Mammary epithelial cell (primary cell): ENCODE measurements at regions of chr15 and their contacts with region 1.

Region 1: GRCh38 chr15:70400766-70401541 is 303.2 kb upstream of the TLE3 start:
- DNase-seq: no peak
- H3K4me3 ChIP-seq: no peak overlapping the region
- H3K27ac ChIP-seq: no peak overlapping the region
- H3K4me1 ChIP-seq: no peaks in the 10 kb centered on the region
- H3K27me3 ChIP-seq: peaks cover 4% of the 10 kb centered on the region
- CTCF ChIP-seq: no peak

Region 2: GRCh38 chr15:70245932-70246331 is 155.0 kb before region 1 on chr15:
- CTCF ChIA-PET with region 1: no interaction called
- dilution Hi-C with region 1: no loop called
- in situ Hi-C with region 1: no loop called
- intact Hi-C with region 1: no loop called
- DNase-seq: peak; percentile 81
- H3K4me3 ChIP-seq: no peak overlapping the region
- H3K27ac ChIP-seq: no peak overlapping the region
- H3K4me1 ChIP-seq: peaks cover 16% of the 10 kb centered on the region
- H3K27me3 ChIP-seq: no peaks in the 10 kb centered on the region
- CTCF ChIP-seq: no peak

Region 3: GRCh38 chr15:70334286-70334685 is 66.7 kb before region 1 on chr15:
- CTCF ChIA-PET with region 1: no interaction called
- dilution Hi-C with region 1: loop called (anchors 5 kb)
- in situ Hi-C with region 1: no loop called
- intact Hi-C with region 1: no loop called
- DNase-seq: no peak
- H3K4me3 ChIP-seq: no peak overlapping the region
- H3K27ac ChIP-seq: no peak overlapping the region
- H3K4me1 ChIP-seq: no peaks in the 10 kb centered on the region
- H3K27me3 ChIP-seq: peaks cover 9% of the 10 kb centered on the region
- CTCF ChIP-seq: no peak